ENCODE measurements at regions of chr12 and their contacts with region 1.

Region 1: DNA sequence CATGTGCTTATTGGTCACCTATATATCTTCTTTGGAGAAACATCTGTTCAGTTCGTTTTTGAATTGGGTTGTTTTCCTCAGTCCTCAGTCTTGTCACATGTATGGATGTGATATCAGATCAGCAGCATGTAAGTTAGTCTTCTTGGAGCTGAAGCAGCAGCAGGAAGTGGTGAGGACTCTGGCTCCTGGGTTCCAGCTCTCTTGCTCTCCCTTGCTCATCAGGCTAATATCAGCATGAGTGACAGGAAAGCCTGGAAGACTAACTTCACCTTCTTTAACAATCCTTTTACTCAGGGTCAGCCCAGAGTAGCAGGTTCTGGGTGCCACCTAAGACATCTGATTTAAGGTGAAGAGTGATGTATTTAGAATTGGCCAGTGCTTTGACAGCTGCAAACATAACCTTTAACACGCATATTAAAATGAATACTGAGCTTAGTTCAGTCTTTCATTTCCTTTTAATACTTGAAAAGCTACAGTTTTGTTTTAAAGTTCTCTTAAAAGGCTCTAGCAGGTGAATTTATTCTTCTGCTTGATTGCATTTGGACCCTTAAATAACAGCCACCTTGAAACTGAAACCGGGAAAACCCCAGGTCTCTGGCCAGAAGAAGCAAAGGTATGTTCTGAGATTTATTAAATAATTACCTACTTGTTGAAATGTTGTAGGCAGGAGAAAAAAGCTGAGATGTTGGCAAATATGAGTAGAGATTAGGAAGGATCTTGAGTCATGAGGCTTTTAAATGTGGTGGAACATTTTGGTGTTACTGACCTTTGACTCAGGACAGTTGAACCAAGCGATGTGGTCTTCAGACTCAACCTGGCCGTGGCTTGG is 54.3 kb downstream of the DRAM1 start:
- DNase-seq: no peak
- ATAC-seq: peak; percentile 63
- H3K4me3 Mint-ChIP-seq: peak overlapping the region; percentile 33
- H3K27ac Mint-ChIP-seq: peak overlapping the region; percentile 82
- H3K4me1 Mint-ChIP-seq: peaks cover 87% of the 10 kb centered on the region
- H3K27me3 Mint-ChIP-seq: no peaks in the 10 kb centered on the region
- CTCF ChIP-seq: no peak

Region 2: DNA sequence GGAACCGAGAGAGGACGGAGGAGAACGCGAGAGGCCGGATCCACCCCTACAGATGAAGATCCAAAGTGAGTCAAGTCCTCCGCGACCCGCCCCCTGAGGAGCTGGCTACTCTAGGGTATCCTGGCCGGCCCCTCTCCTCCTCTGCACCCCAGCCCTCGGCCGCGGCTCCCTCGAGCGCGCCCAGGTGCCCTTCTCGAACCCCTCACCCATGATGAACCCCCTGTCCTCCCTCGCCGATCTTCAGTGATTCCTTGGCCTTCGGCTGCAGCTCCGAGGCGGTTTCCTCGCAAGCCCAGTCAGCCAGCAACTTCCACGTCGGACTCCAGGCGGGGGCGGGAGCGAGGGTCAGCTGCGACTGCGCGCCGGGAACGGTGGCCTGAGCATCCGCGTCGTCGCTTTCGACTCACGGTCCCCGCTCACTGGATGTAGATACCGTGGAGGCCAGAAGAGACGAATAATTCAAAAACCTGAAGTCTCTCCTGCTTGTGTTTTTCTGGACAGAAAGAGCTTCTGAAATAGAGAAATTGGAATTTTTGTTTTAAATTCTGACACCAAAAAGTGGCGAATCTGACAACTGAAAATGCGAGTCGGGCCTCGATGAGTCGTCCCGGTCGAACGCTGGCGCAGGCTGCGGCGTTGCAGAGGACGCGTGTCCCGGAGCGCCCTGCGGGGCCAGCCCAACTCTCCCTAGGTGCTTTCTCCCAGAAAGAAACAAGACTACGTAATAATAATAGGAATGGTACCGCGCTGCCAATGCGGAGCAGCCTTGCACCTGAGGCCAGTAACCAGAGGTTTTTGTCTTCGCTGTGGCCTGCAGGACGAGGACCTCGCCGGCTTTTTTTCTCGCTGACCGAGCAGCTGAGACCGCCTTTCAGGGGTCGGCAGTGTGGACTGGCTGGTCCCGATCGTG is 524.0 kb before region 1 on chr12 and contains the start of gene ARL1:
- CTCF ChIA-PET with region 1: no interaction called
- POLR2A ChIA-PET with region 1: interaction called, 4 read pairs
- intact Hi-C with region 1: loop called (anchors 5 kb)
- DNase-seq: peak; percentile 74
- ATAC-seq: peak; percentile 87
- H3K4me3 Mint-ChIP-seq: peak within 1 kb of the TSS; percentile 99
- H3K27ac Mint-ChIP-seq: peak within 1 kb of the TSS; percentile 97
- H3K4me1 Mint-ChIP-seq: peaks cover 24% of the 10 kb centered on the region
- H3K27me3 Mint-ChIP-seq: no peaks in the 10 kb centered on the region
- CTCF ChIP-seq: no peak
- total RNA-seq, gene ARL1: 45.4 and 49.5 TPM in 2 replicates

Region 3: GRCh38 chr12:102010265-102010994 is 78.7 kb after region 1 on chr12:
- CTCF ChIA-PET with region 1: interaction called, 3 read pairs
- POLR2A ChIA-PET with region 1: interaction called, 3 read pairs
- intact Hi-C with region 1: loop called (anchors 2 kb)
- DNase-seq: peak; percentile 23
- ATAC-seq: peak; percentile 96
- H3K4me3 Mint-ChIP-seq: peak overlapping the region; percentile 63
- H3K27ac Mint-ChIP-seq: peak overlapping the region; percentile 96
- H3K4me1 Mint-ChIP-seq: peaks cover 33% of the 10 kb centered on the region
- H3K27me3 Mint-ChIP-seq: no peaks in the 10 kb centered on the region
- CTCF ChIP-seq: no peak